MCF 10A (cell line): ENCODE measurements at regions of chr2 and their contacts with region 1.

Region 1: DNA sequence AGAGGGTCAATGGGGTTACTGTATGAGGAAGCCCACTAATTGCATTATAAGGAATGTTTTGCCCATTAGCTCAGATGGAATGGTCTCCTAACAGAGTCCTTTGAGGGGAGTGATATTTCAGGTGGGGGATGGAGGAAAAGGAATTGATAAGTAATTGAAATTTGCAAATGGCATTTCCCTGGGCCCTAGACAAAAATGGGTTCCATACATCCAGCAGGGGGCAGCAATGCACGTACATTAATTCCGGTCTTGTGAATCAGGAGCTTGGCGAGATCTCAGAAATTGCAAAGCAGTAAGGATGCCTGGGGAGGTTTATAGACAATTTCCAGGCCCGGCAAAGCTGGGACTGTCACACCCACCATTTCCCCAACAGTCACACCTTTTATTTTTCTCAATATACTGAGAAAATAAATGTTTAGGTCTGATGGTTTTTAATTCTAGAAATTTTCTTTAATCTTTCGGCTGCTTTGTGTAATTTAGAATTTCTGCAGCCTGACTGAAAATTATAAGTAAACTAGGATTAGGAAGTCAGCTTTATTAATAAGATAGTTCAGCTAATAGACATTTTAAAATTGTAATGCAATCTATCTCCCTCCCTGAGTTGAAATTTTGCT is 122.8 kb downstream of the LYPD1 start:
- DNase-seq: peak; percentile 84
- H3K4me3 Mint-ChIP-seq: no peak overlapping the region
- H3K27ac Mint-ChIP-seq: no peak overlapping the region
- H3K4me1 Mint-ChIP-seq: peaks cover 17% of the 10 kb centered on the region
- H3K27me3 Mint-ChIP-seq: no peaks in the 10 kb centered on the region
- CTCF ChIP-seq: peak; percentile 76

Region 2: DNA sequence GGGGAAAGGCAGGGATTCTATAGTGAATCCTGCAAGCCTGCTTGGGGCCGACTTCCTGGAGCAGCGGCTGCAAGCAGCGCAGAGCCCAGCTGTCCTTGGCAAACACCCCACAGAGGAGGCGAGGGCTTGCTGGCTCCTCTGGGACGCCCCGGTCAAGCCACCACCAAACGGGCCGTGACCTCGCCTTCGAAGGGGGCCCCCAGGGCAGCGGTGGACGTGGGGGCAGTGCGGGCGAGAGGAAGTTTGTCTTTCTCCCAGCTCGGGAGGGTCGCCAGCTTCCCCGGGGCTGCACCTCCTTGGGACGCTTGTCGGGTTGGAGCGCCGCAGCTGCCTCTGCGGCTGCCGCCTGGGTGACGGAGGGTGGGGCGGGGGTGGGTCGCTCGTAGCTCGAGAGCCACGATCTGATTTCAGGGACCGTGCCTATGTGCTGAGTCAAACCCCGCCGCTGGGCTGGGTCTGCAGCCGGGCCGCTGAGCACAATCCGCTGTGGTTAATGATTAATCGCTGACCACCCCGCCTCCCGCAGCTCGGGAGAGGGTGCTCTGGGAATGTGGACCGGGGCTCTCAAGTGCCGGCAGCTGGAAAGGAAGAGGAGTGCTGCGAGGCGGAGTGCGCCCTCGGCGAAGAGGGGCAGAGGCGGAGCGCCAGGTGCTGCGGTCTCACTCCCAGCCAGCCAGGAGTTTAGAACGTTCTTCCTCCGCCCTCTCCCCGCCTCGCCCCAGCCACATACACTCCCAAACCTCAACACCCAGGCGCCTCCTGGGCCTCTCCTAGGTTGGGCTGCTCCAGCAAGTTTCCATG is 130.9 kb before region 1 on chr2 and contains the start of gene GPR39:
- CTCF ChIA-PET with region 1: interaction called, 4 read pairs
- POLR2A ChIA-PET with region 1: interaction called, 3 read pairs
- intact Hi-C with region 1: loop called (anchors 2 kb)
- DNase-seq: peak; percentile 98
- H3K4me3 Mint-ChIP-seq: peak within 1 kb of the TSS; percentile 78
- H3K27ac Mint-ChIP-seq: peak within 1 kb of the TSS; percentile 91
- H3K4me1 Mint-ChIP-seq: peaks cover 43% of the 10 kb centered on the region
- H3K27me3 Mint-ChIP-seq: no peaks in the 10 kb centered on the region
- CTCF ChIP-seq: no peak
- total RNA-seq, gene GPR39: 7.2 and 7.7 TPM in 2 replicates

Region 3: DNA sequence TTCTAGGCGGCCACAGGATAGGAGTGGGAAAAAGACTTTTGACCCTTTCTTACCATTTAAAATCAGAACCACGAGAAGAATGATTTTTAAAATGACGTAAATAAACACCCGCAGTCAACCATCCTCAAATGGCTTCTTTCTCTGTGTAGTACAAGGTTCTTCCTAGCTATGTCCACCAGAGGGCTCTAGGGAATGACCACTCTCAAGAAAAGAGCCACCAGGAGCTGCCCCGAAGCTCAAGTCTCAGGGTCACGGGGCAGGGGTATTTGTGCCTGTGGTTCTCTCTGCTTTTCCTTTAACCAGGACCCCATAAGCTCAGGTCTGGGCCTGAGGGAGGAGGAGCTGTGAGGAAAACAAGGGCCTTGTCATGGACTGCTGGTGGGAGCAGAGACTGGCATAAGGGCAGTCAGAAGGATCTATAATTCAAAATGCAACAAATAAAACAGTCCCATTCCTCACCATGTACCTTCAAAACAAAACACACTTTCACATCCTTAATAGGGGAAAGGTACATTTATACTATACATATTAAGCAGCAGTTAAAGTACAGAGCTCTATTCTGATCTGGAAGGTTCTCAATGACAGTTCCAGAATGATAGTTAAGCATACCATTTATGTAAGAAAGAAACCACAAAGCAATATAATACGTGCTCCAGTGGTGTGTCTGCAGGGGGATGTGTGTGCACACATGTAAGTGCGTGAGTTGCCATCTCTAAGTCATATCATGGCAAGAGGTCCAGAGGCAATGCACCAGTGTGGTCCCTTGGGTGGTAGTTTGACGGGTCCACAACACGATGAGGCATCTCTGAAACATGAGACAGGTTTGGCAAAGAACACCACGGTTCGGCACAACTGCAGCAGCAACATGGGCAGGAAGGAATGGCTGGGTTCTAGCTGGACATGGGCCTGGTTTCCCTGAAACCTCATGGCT is 104.2 kb after region 1 on chr2:
- CTCF ChIA-PET with region 1: no interaction called
- POLR2A ChIA-PET with region 1: no interaction called
- intact Hi-C with region 1: loop called (anchors 10 kb)
- DNase-seq: peak; percentile 44
- H3K4me3 Mint-ChIP-seq: no peak overlapping the region
- H3K27ac Mint-ChIP-seq: no peak overlapping the region
- H3K4me1 Mint-ChIP-seq: no peaks in the 10 kb centered on the region
- H3K27me3 Mint-ChIP-seq: no peaks in the 10 kb centered on the region
- CTCF ChIP-seq: no peak

Region 4: DNA sequence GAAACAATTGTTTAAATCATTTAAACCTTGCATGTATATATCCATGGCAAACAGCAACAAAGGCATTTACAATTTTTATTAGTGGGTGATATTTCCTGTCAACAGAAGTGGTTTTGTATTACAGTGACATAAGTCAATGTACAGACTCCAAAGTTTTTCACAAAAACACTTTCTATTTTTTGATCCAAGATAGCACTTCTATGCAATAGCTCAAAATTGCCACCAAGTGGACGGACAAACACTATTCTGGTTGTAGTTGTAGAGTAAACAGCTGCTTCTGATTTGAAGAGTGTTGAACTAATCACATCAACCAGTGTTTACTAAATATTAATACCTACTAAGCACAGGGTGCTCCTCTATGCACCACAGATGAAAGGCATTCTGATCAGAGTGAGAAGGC is 599.7 kb after region 1 on chr2:
- CTCF ChIA-PET with region 1: interaction called, 19 read pairs
- POLR2A ChIA-PET with region 1: no interaction called
- intact Hi-C with region 1: no loop called
- DNase-seq: no peak
- H3K4me3 Mint-ChIP-seq: no peak overlapping the region
- H3K27ac Mint-ChIP-seq: no peak overlapping the region
- H3K4me1 Mint-ChIP-seq: no peaks in the 10 kb centered on the region
- H3K27me3 Mint-ChIP-seq: no peaks in the 10 kb centered on the region
- CTCF ChIP-seq: no peak

Region 5: DNA sequence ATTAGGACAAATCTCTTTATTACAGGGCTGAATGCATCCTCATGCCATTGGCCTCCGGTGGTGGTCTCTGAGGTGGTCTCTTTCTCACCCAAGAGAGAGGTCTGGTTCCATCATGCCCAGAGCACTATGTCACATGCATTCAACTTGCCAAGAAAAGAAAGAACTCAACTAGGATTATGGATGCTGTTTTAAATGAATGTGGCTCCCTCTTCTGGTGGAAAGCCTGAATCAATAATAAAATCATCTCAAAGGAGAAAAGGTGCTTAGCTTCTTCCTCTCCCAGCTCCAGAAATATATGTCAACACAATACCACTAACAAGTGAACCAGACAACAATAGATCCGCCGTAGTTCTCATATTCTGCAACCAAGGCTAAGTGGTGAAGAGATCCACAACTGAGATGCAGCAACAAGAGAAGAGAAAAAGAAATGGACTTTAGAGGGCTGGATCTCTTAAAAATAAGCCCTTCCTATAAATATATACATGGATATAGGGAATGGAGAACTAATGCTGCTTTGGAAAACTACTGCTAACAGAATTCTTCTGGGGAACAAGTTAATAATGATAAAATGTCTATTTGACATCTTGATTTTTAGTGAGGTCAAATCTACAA is 624.3 kb after region 1 on chr2:
- CTCF ChIA-PET with region 1: interaction called, 26 read pairs
- POLR2A ChIA-PET with region 1: no interaction called
- intact Hi-C with region 1: loop called (anchors 1 kb)
- DNase-seq: peak; percentile 62
- H3K4me3 Mint-ChIP-seq: no peak overlapping the region
- H3K27ac Mint-ChIP-seq: no peak overlapping the region
- H3K4me1 Mint-ChIP-seq: no peaks in the 10 kb centered on the region
- H3K27me3 Mint-ChIP-seq: peaks cover 10% of the 10 kb centered on the region
- CTCF ChIP-seq: peak; percentile 57

Region 6: GRCh38 chr2:133844214-133844892 is 1297.2 kb after region 1 on chr2:
- CTCF ChIA-PET with region 1: interaction called, 9 read pairs
- POLR2A ChIA-PET with region 1: no interaction called
- intact Hi-C with region 1: loop called (anchors 5 kb)
- DNase-seq: peak; percentile 84
- H3K4me3 Mint-ChIP-seq: no peak overlapping the region
- H3K27ac Mint-ChIP-seq: no peak overlapping the region
- H3K4me1 Mint-ChIP-seq: peaks cover 15% of the 10 kb centered on the region
- H3K27me3 Mint-ChIP-seq: no peaks in the 10 kb centered on the region
- CTCF ChIP-seq: peak; percentile 90